ENCODE measurements at regions of chr15 and their contacts with region 1.

Region 1: GRCh38 chr15:90233376-90234095 is at the start of gene CIB1:
- DNase-seq: peak; percentile 98
- H3K4me3 Mint-ChIP-seq: peak within 1 kb of the TSS; percentile 97
- H3K27ac Mint-ChIP-seq: peak within 1 kb of the TSS; percentile 92
- H3K4me1 Mint-ChIP-seq: peaks cover 65% of the 10 kb centered on the region
- H3K27me3 Mint-ChIP-seq: no peaks in the 10 kb centered on the region
- total RNA-seq, gene CIB1: 118 to 120 TPM

Region 2: GRCh38 chr15:90101969-90102890 is 131.3 kb before region 1 on chr15 and contains the start of gene IDH2:
- CTCF ChIA-PET with region 1: interaction called, 3 read pairs
- POLR2A ChIA-PET with region 1: interaction called, 56 read pairs
- DNase-seq: peak; percentile 79
- H3K4me3 Mint-ChIP-seq: peak within 1 kb of the TSS; percentile 75
- H3K27ac Mint-ChIP-seq: peak within 1 kb of the TSS; percentile 93
- H3K4me1 Mint-ChIP-seq: peaks cover 53% of the 10 kb centered on the region
- H3K27me3 Mint-ChIP-seq: peaks cover 11% of the 10 kb centered on the region
- total RNA-seq, gene IDH2: 218 to 224 TPM

Region 3: GRCh38 chr15:90221246-90221900 is 12.2 kb before region 1 on chr15:
- CTCF ChIA-PET with region 1: interaction called, 16 read pairs
- POLR2A ChIA-PET with region 1: interaction called, 6 read pairs
- DNase-seq: peak; percentile 39
- H3K4me3 Mint-ChIP-seq: no peak overlapping the region
- H3K27ac Mint-ChIP-seq: no peak overlapping the region
- H3K4me1 Mint-ChIP-seq: peaks cover 22% of the 10 kb centered on the region
- H3K27me3 Mint-ChIP-seq: no peaks in the 10 kb centered on the region

Region 4: GRCh38 chr15:90249203-90249863 is 15.8 kb after region 1 on chr15 and contains the start of gene TTLL13:
- CTCF ChIA-PET with region 1: interaction called, 3 read pairs
- POLR2A ChIA-PET with region 1: interaction called, 38 read pairs
- DNase-seq: peak; percentile 84
- H3K4me3 Mint-ChIP-seq: peak within 1 kb of the TSS; percentile 58
- H3K27ac Mint-ChIP-seq: no peak within 1 kb of the TSS
- H3K4me1 Mint-ChIP-seq: peaks cover 18% of the 10 kb centered on the region
- H3K27me3 Mint-ChIP-seq: peaks cover 3% of the 10 kb centered on the region
- total RNA-seq, gene TTLL13: 0.45 to 0.58 TPM

Region 5: DNA sequence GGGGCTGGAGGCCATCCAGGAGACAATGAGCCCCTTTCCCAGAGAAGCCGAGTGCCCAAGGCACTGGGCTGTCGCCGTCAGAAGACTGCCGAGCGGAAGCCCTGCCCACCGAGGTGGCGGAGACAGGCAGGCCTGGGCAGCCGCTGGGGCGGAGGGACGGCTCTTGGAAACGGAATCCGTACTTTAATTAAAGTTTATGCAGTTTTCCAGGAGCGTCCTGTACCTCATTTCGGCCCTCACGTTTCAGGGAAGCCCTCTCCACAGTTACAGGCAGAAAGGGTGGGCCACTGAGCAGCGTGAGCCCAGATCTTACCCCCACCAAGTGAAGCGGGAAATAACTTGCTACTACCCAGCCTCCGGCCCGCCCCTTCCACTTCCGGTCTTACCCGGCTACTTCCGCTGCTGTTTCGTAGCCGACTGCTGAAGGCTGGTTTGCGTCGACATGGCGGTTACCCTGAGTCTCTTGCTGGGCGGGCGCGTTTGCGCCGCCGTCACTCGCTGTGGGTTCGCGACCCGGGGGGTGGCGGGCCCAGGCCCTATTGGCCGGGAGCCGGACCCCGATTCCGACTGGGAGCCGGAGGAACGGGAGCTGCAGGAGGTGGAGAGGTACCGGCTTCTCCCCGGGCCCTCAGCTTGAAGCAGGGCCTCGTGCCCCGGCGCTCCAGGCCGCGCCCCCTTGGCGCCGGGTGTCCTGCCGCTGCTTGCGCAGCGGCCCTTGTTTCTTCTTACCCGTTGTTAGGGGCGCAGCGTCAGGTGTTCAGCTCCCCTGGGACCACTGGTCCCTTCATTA is 31.9 kb after region 1 on chr15 and contains the start of gene NGRN:
- CTCF ChIA-PET with region 1: interaction called, 11 read pairs
- POLR2A ChIA-PET with region 1: interaction called, 99 read pairs
- DNase-seq: peak; percentile 94
- H3K4me3 Mint-ChIP-seq: peak within 1 kb of the TSS; percentile 87
- H3K27ac Mint-ChIP-seq: peak within 1 kb of the TSS; percentile 90
- H3K4me1 Mint-ChIP-seq: peaks cover 50% of the 10 kb centered on the region
- H3K27me3 Mint-ChIP-seq: no peaks in the 10 kb centered on the region
- total RNA-seq, gene NGRN: 27.4 to 28.3 TPM

Region 6: GRCh38 chr15:90291679-90292356 is 58.3 kb after region 1 on chr15:
- CTCF ChIA-PET with region 1: interaction called, 12 read pairs
- POLR2A ChIA-PET with region 1: interaction called, 3 read pairs
- DNase-seq: peak; percentile 38
- H3K4me3 Mint-ChIP-seq: no peak overlapping the region
- H3K27ac Mint-ChIP-seq: no peak overlapping the region
- H3K4me1 Mint-ChIP-seq: peaks cover 19% of the 10 kb centered on the region
- H3K27me3 Mint-ChIP-seq: peaks cover 16% of the 10 kb centered on the region